ENCODE measurements at regions of chr10 and their contacts with region 1.

Region 1: GRCh38 chr10:13160934-13161856 is at the start of gene MCM10:
- DNase-seq: peak; percentile 99
- H3K4me3 ChIP-seq: peak within 1 kb of the TSS; percentile 59 to 84 (median 69)
- H3K27ac ChIP-seq: peak within 1 kb of the TSS; percentile 78
- H3K4me1 ChIP-seq: peaks cover 12% of the 10 kb centered on the region
- H3K27me3 ChIP-seq: no peaks in the 10 kb centered on the region
- CTCF ChIP-seq: peak; percentile 79 to 81
- total RNA-seq, gene MCM10: 1.5 to 25.4 TPM

Region 2: GRCh38 chr10:13180788-13181187 is 19.6 kb after region 1 on chr10:
- CTCF ChIA-PET with region 1: no interaction called
- dilution Hi-C with region 1: no loop called
- in situ Hi-C with region 1: no loop called
- intact Hi-C with region 1: no loop called
- DNase-seq: no peak
- H3K4me3 ChIP-seq: no peak overlapping the region
- H3K27ac ChIP-seq: no peak overlapping the region
- H3K4me1 ChIP-seq: no peaks in the 10 kb centered on the region
- H3K27me3 ChIP-seq: no peaks in the 10 kb centered on the region
- CTCF ChIP-seq: no peak

Region 3: DNA sequence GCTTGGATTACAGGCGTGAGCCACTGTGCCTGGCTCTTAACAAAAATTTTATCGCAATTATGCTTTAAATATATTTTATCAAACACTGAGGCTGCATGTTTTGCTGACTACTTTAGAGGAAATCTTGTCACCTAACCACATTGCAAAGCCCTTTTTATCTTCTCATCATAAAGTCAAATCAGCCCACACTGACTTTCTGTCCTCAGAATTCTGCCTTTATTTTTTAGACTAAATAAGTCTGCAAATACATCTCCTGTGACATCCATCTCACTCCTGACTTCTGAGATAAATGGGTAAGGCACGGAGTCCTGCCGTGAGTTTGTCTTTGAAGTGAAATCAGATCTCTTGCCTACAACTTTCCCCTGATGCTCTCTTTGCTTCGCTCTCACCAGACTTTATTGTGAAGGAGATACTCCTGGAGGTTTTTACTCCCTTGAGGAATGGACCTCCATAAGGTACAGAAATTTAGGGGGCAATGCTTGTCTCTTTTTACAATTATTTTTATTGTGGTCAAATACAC is 96.5 kb after region 1 on chr10:
- CTCF ChIA-PET with region 1: no interaction called
- dilution Hi-C with region 1: no loop called
- in situ Hi-C with region 1: no loop called
- intact Hi-C with region 1: no loop called
- DNase-seq: no peak
- H3K4me3 ChIP-seq: no peak overlapping the region
- H3K27ac ChIP-seq: no peak overlapping the region
- H3K4me1 ChIP-seq: no peaks in the 10 kb centered on the region
- H3K27me3 ChIP-seq: no peaks in the 10 kb centered on the region
- CTCF ChIP-seq: no peak

Region 4: GRCh38 chr10:13348216-13349017 is 187.2 kb after region 1 on chr10 and contains the start of gene SEPHS1:
- CTCF ChIA-PET with region 1: no interaction called
- dilution Hi-C with region 1: no loop called
- in situ Hi-C with region 1: no loop called
- intact Hi-C with region 1: loop called (anchors 1 kb)
- DNase-seq: peak; percentile 60
- H3K4me3 ChIP-seq: peak within 1 kb of the TSS; percentile 66 to 93 (median 69)
- H3K27ac ChIP-seq: peak within 1 kb of the TSS; percentile 72
- H3K4me1 ChIP-seq: peaks cover 18% of the 10 kb centered on the region
- H3K27me3 ChIP-seq: no peaks in the 10 kb centered on the region
- CTCF ChIP-seq: no peak
- total RNA-seq, gene SEPHS1: 30.2 to 34.6 TPM

Measured in mammary epithelial cell (primary cell).